Prostate gland (tissue), 2 donors: ENCODE measurements at regions of chr7 and their contacts with region 1.

Region 1: DNA sequence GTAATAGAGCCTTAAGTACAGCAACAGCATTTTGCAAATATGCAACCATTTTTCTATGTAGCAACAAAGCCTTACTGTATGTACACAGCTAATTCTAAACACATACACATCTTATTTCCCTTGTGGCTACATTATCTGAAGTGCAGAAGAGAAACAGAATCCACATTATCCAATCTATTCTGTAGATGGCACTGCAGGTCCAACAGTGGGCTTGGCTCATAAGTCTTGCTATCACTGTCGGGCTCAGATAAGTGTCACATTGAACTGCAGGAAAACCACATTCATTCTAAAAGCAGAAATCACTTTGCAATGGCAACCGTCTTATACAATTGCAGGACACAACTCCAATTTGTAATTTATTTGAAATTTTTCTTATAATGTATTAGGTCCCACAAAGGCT is 109.8 kb upstream of the NOBOX start:
- DNase-seq: no peak
- H3K4me3 ChIP-seq: no peak overlapping the region
- H3K27ac ChIP-seq: no peak overlapping the region
- H3K4me1 ChIP-seq: no peaks in the 10 kb centered on the region
- H3K27me3 ChIP-seq: no peaks in the 10 kb centered on the region
- CTCF ChIP-seq: peak in 1 of 4 experiments; percentile 40
- POLR2A ChIP-seq: no peak

Region 2: DNA sequence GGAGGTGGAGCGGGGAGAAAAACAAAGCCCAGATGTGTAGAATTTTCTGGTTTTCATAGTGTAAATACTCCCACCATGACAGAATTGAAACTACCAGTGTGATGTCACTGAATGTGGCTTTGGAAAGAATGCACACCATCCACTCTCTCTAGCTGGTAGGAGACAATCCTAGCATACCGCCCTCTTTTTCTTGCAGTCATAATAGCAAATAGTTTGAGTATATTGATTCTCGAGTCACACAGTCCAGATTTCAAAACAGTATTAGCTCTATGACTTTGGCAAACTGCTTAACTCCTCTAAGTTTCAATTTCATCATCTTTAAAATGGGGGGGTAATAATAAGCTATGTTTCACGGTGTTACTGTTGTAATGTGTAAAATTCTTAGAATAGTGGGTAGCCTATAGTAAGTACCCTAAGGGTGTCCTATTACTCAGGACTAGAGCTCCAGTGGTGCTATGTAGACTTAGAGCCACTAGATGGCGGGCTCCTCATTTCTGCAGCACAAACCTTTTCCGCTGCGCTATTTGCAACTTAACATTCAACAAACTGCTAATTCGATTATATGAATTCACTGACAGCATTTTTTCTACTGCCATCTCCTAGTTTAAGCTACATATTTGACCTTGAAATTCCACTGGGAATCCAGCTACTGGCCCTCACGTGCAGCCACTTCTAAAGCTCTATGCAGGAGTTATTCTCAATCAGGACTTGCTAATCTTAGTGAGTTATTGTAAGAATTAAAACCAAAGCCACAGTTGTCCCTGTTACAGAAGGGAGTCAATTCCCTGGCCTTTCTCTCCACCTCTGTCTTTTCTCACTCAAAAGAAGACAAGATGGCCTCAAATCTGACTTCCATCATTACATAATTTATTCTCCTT is 1272.8 kb before region 1 on chr7:
- intact Hi-C with region 1: no loop called
- DNase-seq: peak; percentile 74
- H3K4me3 ChIP-seq: no peak overlapping the region
- H3K27ac ChIP-seq: no peak overlapping the region
- H3K4me1 ChIP-seq: no peaks in the 10 kb centered on the region
- H3K27me3 ChIP-seq: no peaks in the 10 kb centered on the region
- CTCF ChIP-seq: peak; percentile 65 to 90 (median 88)
- POLR2A ChIP-seq: no peak

Region 3: GRCh38 chr7:144534196-144534595 is 20.9 kb after region 1 on chr7:
- intact Hi-C with region 1: loop called (anchors 2 kb)
- DNase-seq: no peak
- H3K4me3 ChIP-seq: no peak overlapping the region
- H3K27ac ChIP-seq: no peak overlapping the region
- H3K4me1 ChIP-seq: no peaks in the 10 kb centered on the region
- H3K27me3 ChIP-seq: no peaks in the 10 kb centered on the region
- CTCF ChIP-seq: no peak
- POLR2A ChIP-seq: no peak